Endothelial cell of umbilical vein (primary cell): ENCODE measurements at regions of chr15 and their contacts with region 1.

Region 1: DNA sequence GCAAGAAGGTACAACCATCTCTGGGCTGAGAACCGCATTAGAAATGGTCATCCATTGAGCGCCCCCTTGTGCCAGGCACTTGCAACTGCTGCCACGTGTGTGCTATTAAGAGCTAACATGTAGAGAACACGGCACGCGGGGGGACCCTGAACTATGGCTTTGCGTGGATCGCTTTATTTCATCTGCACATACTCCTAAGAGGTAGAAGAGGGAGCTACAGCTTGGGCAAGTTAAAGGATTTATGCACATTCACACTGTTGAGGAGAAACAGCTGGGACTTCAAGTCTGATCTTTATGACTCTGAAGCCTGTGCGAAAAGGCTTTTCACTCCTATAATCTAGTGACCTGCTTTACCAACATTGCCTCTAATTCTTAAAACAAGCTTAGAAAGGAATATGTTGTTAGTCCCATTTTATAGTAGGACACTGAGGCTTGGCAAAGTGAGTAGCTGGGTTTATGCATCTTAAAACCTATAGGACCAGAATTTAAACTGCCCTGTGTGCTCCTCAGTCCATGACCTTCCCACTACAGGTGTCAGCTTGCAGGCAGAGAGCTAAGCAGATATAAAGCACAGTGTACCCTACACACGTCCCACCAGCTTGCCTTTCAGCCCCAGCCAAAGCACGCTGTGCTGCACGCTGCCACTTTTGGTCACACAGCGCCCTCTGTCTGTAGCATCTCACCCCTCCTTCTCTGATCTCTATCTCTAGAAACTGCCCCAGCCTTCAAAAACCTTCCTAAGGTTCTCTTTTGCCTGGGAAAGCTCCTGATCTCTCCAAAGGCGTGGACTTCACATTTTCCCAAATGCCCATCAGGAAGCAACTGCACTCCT is 57.8 kb downstream of the STARD5 start:
- DNase-seq: peak; percentile 80
- H3K4me3 ChIP-seq: no peak overlapping the region
- H3K27ac ChIP-seq: no peak overlapping the region
- H3K4me1 ChIP-seq: peaks cover 5% of the 10 kb centered on the region
- H3K27me3 ChIP-seq: peaks cover 0 to 2% of the 10 kb centered on the region in 2 experiments
- CTCF ChIP-seq: peak; percentile 93 to 94
- POLR2A ChIP-seq: no peak

Region 2: DNA sequence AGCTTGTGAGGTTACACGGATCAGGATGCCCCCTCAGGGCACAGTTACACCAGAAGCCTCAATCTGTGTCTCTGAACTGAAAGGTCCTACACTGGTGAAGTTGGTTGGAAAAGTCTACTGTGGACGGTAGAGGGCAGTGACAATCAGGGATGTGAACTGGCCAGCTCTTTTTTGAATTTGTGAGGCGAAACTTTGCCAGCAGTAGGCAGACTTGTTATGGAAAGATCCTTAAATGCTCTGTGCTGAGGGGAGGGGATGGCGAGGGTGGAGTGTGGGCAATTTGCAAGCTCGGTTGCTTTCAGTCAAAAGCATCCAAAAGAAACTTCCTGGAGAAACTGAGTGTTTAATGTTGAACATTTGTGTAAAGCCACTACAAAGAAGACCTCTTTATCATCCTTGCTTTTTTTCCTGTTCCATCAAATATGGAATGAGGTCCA is 698.4 kb before region 1 on chr15:
- CTCF ChIA-PET with region 1: interaction called, 24 read pairs
- POLR2A ChIA-PET with region 1: no interaction called
- dilution Hi-C with region 1: no loop called
- intact Hi-C with region 1: loop called (anchors 1 kb)
- DNase-seq: peak; percentile 88
- H3K4me3 ChIP-seq: no peak overlapping the region
- H3K27ac ChIP-seq: no peak overlapping the region
- H3K4me1 ChIP-seq: peaks cover 3% of the 10 kb centered on the region
- H3K27me3 ChIP-seq: peaks cover 0 to 4% of the 10 kb centered on the region in 2 experiments
- CTCF ChIP-seq: peak; percentile 77 to 78
- POLR2A ChIP-seq: no peak

Region 3: GRCh38 chr15:80989518-80990478 is 276.4 kb before region 1 on chr15 and contains the start of gene MESD:
- CTCF ChIA-PET with region 1: interaction called, 52 read pairs
- POLR2A ChIA-PET with region 1: no interaction called
- dilution Hi-C with region 1: no loop called
- intact Hi-C with region 1: no loop called
- DNase-seq: peak; percentile 96
- H3K4me3 ChIP-seq: peak within 1 kb of the TSS; percentile 61 to 86 (median 77)
- H3K27ac ChIP-seq: peak within 1 kb of the TSS; percentile 75
- H3K4me1 ChIP-seq: peaks cover 18% of the 10 kb centered on the region
- H3K27me3 ChIP-seq: no peaks in the 10 kb centered on the region
- CTCF ChIP-seq: no peak
- POLR2A ChIP-seq: peak; percentile 95
- total RNA-seq, gene MESD: 30.5 and 32.9 TPM in 2 replicates

Region 4: DNA sequence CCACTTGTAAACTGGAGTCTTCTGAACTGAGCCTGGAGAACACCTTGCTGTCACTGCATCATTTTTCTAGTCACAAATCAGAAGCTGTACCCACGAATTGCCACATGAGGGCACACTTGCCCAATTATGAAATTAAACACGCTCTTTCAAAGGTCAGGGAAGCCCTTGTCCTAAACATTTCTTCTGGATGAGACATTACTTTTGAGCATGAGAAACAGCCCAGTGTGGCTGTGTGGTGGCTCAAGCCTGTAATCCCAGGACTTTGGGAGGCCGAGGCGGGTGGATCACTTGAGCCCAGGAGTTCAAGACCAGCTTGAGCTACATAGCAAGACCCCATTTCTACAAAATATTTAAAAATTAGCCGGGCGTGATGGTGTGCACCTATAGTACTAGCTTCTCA is 159.6 kb before region 1 on chr15:
- CTCF ChIA-PET with region 1: interaction called, 271 read pairs
- POLR2A ChIA-PET with region 1: no interaction called
- dilution Hi-C with region 1: no loop called
- intact Hi-C with region 1: loop called (anchors 1 kb)
- DNase-seq: peak; percentile 78
- H3K4me3 ChIP-seq: no peak overlapping the region
- H3K27ac ChIP-seq: no peak overlapping the region
- H3K4me1 ChIP-seq: peaks cover 7% of the 10 kb centered on the region
- H3K27me3 ChIP-seq: peaks cover 0 to 2% of the 10 kb centered on the region in 2 experiments
- CTCF ChIP-seq: peak; percentile 66 to 73
- POLR2A ChIP-seq: no peak

Region 5: GRCh38 chr15:81155375-81156218 is 110.6 kb before region 1 on chr15:
- CTCF ChIA-PET with region 1: interaction called, 472 read pairs
- POLR2A ChIA-PET with region 1: no interaction called
- dilution Hi-C with region 1: no loop called
- intact Hi-C with region 1: loop called (anchors 1 kb)
- DNase-seq: peak; percentile 41
- H3K4me3 ChIP-seq: no peak overlapping the region
- H3K27ac ChIP-seq: no peak overlapping the region
- H3K4me1 ChIP-seq: no peaks in the 10 kb centered on the region
- H3K27me3 ChIP-seq: no peaks in the 10 kb centered on the region
- CTCF ChIP-seq: peak; percentile 28 to 37
- POLR2A ChIP-seq: no peak

Region 6: GRCh38 chr15:81284256-81285031 is 18.3 kb after region 1 on chr15:
- CTCF ChIA-PET with region 1: interaction called, 25 read pairs
- POLR2A ChIA-PET with region 1: no interaction called
- dilution Hi-C with region 1: no loop called
- intact Hi-C with region 1: no loop called
- DNase-seq: no peak
- H3K4me3 ChIP-seq: no peak overlapping the region
- H3K27ac ChIP-seq: no peak overlapping the region
- H3K4me1 ChIP-seq: no peaks in the 10 kb centered on the region
- H3K27me3 ChIP-seq: peaks cover 0 to 2% of the 10 kb centered on the region in 2 experiments
- CTCF ChIP-seq: no peak
- POLR2A ChIP-seq: no peak

Region 7: GRCh38 chr15:81356252-81356651 is 90.1 kb after region 1 on chr15:
- CTCF ChIA-PET with region 1: interaction called, 13 read pairs
- POLR2A ChIA-PET with region 1: no interaction called
- dilution Hi-C with region 1: no loop called
- intact Hi-C with region 1: no loop called
- DNase-seq: no peak
- H3K4me3 ChIP-seq: no peak overlapping the region
- H3K27ac ChIP-seq: no peak overlapping the region
- H3K4me1 ChIP-seq: no peaks in the 10 kb centered on the region
- H3K27me3 ChIP-seq: peaks cover 0 to 2% of the 10 kb centered on the region in 2 experiments
- CTCF ChIP-seq: no peak
- POLR2A ChIP-seq: no peak

Region 8: GRCh38 chr15:81596159-81596865 is 330.2 kb after region 1 on chr15:
- CTCF ChIA-PET with region 1: no interaction called
- POLR2A ChIA-PET with region 1: no interaction called
- dilution Hi-C with region 1: no loop called
- intact Hi-C with region 1: no loop called
- DNase-seq: no peak
- H3K4me3 ChIP-seq: no peak overlapping the region
- H3K27ac ChIP-seq: no peak overlapping the region
- H3K4me1 ChIP-seq: no peaks in the 10 kb centered on the region
- H3K27me3 ChIP-seq: no peaks in the 10 kb centered on the region
- CTCF ChIP-seq: no peak
- POLR2A ChIP-seq: no peak